H1 (cell line): ENCODE measurements at regions of chr4 and their contacts with region 1.

Region 1: GRCh38 chr4:95165926-95166524 is 382.7 kb downstream of the UNC5C start:
- DNase-seq: no peak
- H3K4me3 ChIP-seq: no peak overlapping the region
- H3K27ac ChIP-seq: no peak overlapping the region
- H3K4me1 ChIP-seq: peaks cover 0 to 3% (median 0%) of the 10 kb centered on the region in 4 experiments; a peak in 1 of 7 replicates
- H3K27me3 ChIP-seq: no peaks in the 10 kb centered on the region
- CTCF ChIP-seq: peak in 2 of 3 experiments; percentile 44 to 59; a peak in 2 of 4 replicates
- EP300 ChIP-seq: no peak
- POLR2A ChIP-seq: no peak
- RAD21 ChIP-seq: peak; percentile 89 to 91

Region 2: DNA sequence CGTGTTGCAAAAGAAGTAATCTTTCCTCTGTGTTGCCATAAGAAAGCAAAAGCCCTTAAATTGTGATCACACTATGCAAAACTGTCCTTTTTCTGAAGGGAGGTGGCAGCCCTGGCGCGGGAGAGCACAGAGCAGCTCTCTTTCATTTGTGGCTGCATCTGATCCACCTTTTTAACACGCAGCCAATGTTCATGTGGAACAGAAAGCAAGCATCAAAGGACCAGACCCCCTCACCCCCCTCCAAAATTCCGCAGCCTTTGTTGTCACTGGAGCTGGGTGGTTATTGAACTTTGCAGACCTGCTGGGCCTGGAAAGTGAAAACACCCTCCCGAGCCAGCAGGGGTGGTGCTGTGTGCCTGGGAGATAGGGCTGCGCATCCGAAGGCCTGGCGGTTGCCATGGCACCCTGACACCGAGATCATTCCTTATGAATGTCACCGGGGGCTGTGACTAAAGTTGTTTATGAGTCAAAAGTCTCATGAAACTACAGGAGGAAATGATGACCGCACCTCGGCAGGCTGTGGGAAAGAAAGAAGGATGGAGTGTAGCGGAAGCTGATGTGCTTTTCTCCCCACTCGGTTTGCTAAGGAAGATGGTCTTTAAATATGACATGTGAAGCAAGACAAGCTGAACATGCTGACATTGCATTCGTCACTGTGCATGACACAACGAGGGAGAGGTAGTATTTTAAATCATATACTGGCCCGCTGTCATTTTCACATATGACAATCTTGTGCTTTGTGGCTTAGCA is 15.4 kb after region 1 on chr4:
- CTCF ChIA-PET with region 1: interaction called, 13 read pairs
- POLR2A ChIA-PET with region 1: no interaction called
- DNase-seq: peak in 1 of 2 experiments; percentile 59
- H3K4me3 ChIP-seq: peak overlapping the region in 1 of 4 experiments; percentile 34; a peak in 1 of 8 replicates
- H3K27ac ChIP-seq: no peak overlapping the region
- H3K4me1 ChIP-seq: peaks cover 0 to 13% (median 5%) of the 10 kb centered on the region in 4 experiments; a peak in 4 of 7 replicates
- H3K27me3 ChIP-seq: no peaks in the 10 kb centered on the region
- CTCF ChIP-seq: peak; percentile 19 to 39 (median 35); a peak in 3 of 4 replicates
- EP300 ChIP-seq: no peak
- POLR2A ChIP-seq: no peak
- RAD21 ChIP-seq: peak; percentile 35 to 51; a peak in 3 of 4 replicates

Region 3: GRCh38 chr4:95204873-95205272 is 38.8 kb after region 1 on chr4:
- CTCF ChIA-PET with region 1: interaction called, 12 read pairs
- POLR2A ChIA-PET with region 1: no interaction called
- DNase-seq: no peak
- H3K4me3 ChIP-seq: no peak overlapping the region
- H3K27ac ChIP-seq: no peak overlapping the region
- H3K4me1 ChIP-seq: peaks cover 0 to 3% (median 0%) of the 10 kb centered on the region in 4 experiments; a peak in 1 of 7 replicates
- H3K27me3 ChIP-seq: no peaks in the 10 kb centered on the region
- CTCF ChIP-seq: peak; percentile 18 to 64 (median 59)
- EP300 ChIP-seq: no peak
- POLR2A ChIP-seq: no peak
- RAD21 ChIP-seq: peak; percentile 68 to 70

Region 4: GRCh38 chr4:95544113-95545103 is 378.4 kb after region 1 on chr4:
- CTCF ChIA-PET with region 1: interaction called, 52 read pairs
- POLR2A ChIA-PET with region 1: no interaction called
- DNase-seq: no peak
- H3K4me3 ChIP-seq: no peak overlapping the region
- H3K27ac ChIP-seq: no peak overlapping the region
- H3K4me1 ChIP-seq: peaks cover 0 to 2% (median 2%) of the 10 kb centered on the region in 4 experiments; a peak in 2 of 7 replicates
- H3K27me3 ChIP-seq: peaks cover 5 to 38% (median 21%) of the 10 kb centered on the region in 4 experiments; a peak in 6 of 7 replicates
- CTCF ChIP-seq: peak in 1 of 3 experiments; percentile 33; a peak in 2 of 4 replicates
- EP300 ChIP-seq: no peak
- POLR2A ChIP-seq: no peak
- RAD21 ChIP-seq: peak; percentile 23 to 41; a peak in 3 of 4 replicates

Region 5: GRCh38 chr4:95549246-95550114 is 383.5 kb after region 1 on chr4:
- CTCF ChIA-PET with region 1: interaction called, 52 read pairs
- POLR2A ChIA-PET with region 1: no interaction called
- DNase-seq: peak in 1 of 2 experiments; percentile 75
- H3K4me3 ChIP-seq: peak overlapping the region; percentile 59 to 82 (median 68)
- H3K27ac ChIP-seq: no peak overlapping the region
- H3K4me1 ChIP-seq: peaks cover 1 to 7% (median 3%) of the 10 kb centered on the region in 4 experiments; a peak in 5 of 7 replicates
- H3K27me3 ChIP-seq: peaks cover 10 to 54% (median 31%) of the 10 kb centered on the region in 4 experiments; a peak in 6 of 7 replicates
- CTCF ChIP-seq: no peak
- EP300 ChIP-seq: no peak
- POLR2A ChIP-seq: no peak
- RAD21 ChIP-seq: no peak